IMR-90 (cell line): ENCODE measurements at regions of chr5 and their contacts with region 1.

Region 1: DNA sequence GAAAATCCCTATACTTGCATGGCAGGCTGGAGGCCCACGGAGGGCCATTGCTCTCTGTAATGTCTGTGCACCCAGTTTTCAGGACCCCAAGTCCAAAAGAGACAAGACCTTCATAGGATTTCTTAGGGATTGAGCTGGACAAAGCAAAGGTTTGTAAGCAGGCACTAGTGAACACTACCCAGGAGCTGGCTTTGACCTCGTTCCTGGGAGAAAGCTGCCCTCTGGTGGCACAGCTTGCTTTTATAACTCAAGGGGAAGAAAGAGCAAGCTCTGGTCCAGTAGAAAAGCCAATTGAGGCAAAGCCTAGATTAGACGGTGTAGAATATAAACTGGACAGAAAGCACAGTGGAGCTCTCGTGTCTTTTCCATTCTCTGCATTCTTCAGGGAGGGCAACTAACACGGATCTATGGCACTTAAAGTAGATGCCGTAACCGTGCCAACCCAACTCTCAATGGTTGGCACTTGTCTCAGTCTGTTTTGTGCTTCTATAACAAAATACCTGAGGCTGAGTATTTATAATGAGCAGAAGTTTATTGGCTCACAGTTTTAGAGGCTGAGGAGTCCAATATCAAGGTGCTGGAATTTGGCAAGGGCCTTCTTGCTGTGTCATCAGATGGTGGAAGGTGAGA is 7.9 kb downstream of the GABRP start:
- DNase-seq: peak; percentile 56
- ATAC-seq: peak; percentile 97
- H3K4me3 ChIP-seq: no peak overlapping the region
- H3K27ac ChIP-seq: no peak overlapping the region
- H3K4me1 ChIP-seq: no peaks in the 10 kb centered on the region
- H3K27me3 ChIP-seq: peaks cover 19% of the 10 kb centered on the region
- CTCF ChIP-seq: peak; percentile 61
- POLR2A ChIP-seq: no peak
- RAD21 ChIP-seq: peak; percentile 69

Region 2: DNA sequence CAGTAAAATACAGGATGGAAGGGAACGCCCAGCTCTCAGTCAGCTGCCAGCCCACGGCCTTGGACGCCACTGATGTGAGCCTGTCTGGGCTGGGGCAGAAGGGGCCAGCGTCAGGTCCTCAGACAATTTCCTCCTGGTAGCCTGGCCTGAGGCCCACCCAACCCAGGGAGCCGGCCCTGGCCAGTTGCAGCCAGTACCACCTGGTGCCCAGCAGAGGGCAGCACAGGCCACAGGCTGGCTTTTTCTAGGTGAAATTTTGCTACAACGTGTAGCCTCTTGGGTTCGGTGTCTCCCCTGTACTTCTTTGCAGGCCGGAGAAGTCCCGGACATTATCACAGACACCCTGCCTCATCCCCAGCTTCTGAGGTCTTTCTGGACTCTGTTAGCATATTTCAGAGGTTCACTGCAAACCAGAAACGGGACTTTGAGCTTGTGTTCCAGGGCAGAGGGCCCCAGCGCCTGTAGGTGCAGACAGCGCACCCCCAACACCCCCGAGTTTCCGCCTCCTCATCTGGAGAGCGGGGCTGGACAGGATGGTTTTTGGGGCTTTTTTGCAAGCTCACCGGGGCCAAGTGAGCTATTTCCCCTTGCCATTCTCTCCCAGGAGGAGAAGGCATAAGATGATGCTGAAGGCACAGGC is 356.4 kb before region 1 on chr5:
- CTCF ChIA-PET with region 1: no interaction called
- POLR2A ChIA-PET with region 1: no interaction called
- dilution Hi-C with region 1: no loop called
- in situ Hi-C with region 1: no loop called
- intact Hi-C with region 1: loop called (anchors 10 kb)
- DNase-seq: peak; percentile 37
- ATAC-seq: peak; percentile 99
- H3K4me3 ChIP-seq: no peak overlapping the region
- H3K27ac ChIP-seq: no peak overlapping the region
- H3K4me1 ChIP-seq: no peaks in the 10 kb centered on the region
- H3K27me3 ChIP-seq: no peaks in the 10 kb centered on the region; the same call in 1 of the 2 replicates
- CTCF ChIP-seq: peak; percentile 96
- POLR2A ChIP-seq: no peak
- RAD21 ChIP-seq: peak; percentile 97

Region 3: GRCh38 chr5:170571875-170572852 is 219.3 kb before region 1 on chr5:
- CTCF ChIA-PET with region 1: no interaction called
- POLR2A ChIA-PET with region 1: no interaction called
- dilution Hi-C with region 1: no loop called
- in situ Hi-C with region 1: no loop called
- intact Hi-C with region 1: no loop called
- DNase-seq: no peak
- ATAC-seq: no peak
- H3K4me3 ChIP-seq: no peak overlapping the region
- H3K27ac ChIP-seq: no peak overlapping the region
- H3K4me1 ChIP-seq: no peaks in the 10 kb centered on the region
- H3K27me3 ChIP-seq: no peaks in the 10 kb centered on the region; the same call in none of the 2 replicates
- CTCF ChIP-seq: no peak
- POLR2A ChIP-seq: no peak
- RAD21 ChIP-seq: no peak

Region 4: GRCh38 chr5:170747851-170748250 is 43.6 kb before region 1 on chr5:
- CTCF ChIA-PET with region 1: interaction called, 35 read pairs
- POLR2A ChIA-PET with region 1: no interaction called
- dilution Hi-C with region 1: no loop called
- in situ Hi-C with region 1: no loop called
- intact Hi-C with region 1: loop called (anchors 1 kb)
- DNase-seq: no peak
- ATAC-seq: no peak
- H3K4me3 ChIP-seq: no peak overlapping the region
- H3K27ac ChIP-seq: no peak overlapping the region
- H3K4me1 ChIP-seq: peaks cover 2% of the 10 kb centered on the region; the same call in 1 of the 2 replicates
- H3K27me3 ChIP-seq: peaks cover 35% of the 10 kb centered on the region
- CTCF ChIP-seq: peak; percentile 34
- POLR2A ChIP-seq: no peak
- RAD21 ChIP-seq: peak; percentile 29; the same call in 1 of the 2 replicates

Region 5: DNA sequence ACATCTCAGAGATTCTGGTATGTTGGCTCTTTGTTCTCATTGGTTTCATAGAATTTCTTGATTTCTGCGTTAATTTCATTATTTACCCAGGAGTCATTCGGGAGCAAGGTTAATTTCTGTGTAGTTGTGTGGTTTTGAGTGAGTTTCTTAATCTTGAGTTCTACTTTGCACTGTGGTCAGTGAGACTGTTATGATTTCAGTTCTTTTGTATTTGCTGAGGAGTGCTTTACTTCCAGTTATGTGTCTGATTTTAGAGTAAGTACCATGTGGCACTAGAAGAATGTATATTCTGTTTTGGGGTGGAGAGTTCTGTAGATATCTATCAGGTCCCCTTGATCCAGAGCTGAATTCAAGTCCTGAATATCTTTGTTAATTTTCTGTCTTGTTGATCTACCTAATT is 82.6 kb after region 1 on chr5:
- CTCF ChIA-PET with region 1: no interaction called
- POLR2A ChIA-PET with region 1: no interaction called
- dilution Hi-C with region 1: no loop called
- in situ Hi-C with region 1: no loop called
- intact Hi-C with region 1: no loop called
- DNase-seq: no peak
- ATAC-seq: no peak
- H3K4me3 ChIP-seq: no peak overlapping the region
- H3K27ac ChIP-seq: no peak overlapping the region
- H3K4me1 ChIP-seq: no peaks in the 10 kb centered on the region; the same call in 1 of the 2 replicates
- H3K27me3 ChIP-seq: no peaks in the 10 kb centered on the region
- CTCF ChIP-seq: no peak
- POLR2A ChIP-seq: no peak
- RAD21 ChIP-seq: no peak